ENCODE measurements at regions of chr14 and their contacts with region 1.

Region 1: DNA sequence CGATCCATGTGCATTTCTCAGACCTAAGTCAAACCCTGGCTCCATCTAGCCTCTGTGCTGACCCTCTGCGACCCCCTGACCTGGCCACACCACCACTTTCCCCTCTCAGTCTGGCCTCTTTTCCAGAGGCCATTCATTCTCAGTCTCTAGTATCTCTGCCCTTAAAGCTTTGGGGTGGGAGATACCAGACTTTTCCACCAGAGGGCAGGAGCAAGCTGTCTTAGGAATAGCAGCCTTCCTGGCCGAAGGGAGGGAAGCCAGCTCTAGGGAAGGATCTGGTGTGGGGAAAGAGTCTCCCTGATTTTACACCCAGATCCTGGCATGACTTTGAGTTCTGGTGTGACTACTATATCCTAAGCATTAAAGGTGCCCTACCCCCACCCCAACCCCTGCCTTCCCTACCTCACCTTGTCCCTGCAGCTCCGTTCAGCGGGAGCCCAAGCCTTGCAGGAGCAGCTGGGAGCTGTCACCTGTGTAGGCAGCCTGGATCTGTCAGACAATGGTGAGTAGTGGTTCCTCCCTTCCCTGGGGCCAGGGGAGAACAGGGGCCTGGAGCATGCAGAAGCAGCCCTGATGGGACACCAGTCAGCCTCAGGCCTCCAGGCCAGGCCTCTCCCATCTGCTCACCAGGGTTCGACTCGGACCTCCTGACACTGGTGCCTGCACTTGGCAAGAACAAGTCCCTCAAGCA is 6.6 kb downstream of the CARMIL3 start:
- DNase-seq: peak in 6 of 7 donors; percentile 72 to 92 (median 86)
- H3K4me3 ChIP-seq: no peak overlapping the region
- H3K27ac ChIP-seq: no peak overlapping the region
- H3K4me1 ChIP-seq: peaks cover 0 to under 1% of the 10 kb centered on the region in 2 donors
- H3K27me3 ChIP-seq: no peaks in the 10 kb centered on the region
- CTCF ChIP-seq: peak; percentile 86 to 98 (median 92)
- POLR2A ChIP-seq: no peak

Region 2: DNA sequence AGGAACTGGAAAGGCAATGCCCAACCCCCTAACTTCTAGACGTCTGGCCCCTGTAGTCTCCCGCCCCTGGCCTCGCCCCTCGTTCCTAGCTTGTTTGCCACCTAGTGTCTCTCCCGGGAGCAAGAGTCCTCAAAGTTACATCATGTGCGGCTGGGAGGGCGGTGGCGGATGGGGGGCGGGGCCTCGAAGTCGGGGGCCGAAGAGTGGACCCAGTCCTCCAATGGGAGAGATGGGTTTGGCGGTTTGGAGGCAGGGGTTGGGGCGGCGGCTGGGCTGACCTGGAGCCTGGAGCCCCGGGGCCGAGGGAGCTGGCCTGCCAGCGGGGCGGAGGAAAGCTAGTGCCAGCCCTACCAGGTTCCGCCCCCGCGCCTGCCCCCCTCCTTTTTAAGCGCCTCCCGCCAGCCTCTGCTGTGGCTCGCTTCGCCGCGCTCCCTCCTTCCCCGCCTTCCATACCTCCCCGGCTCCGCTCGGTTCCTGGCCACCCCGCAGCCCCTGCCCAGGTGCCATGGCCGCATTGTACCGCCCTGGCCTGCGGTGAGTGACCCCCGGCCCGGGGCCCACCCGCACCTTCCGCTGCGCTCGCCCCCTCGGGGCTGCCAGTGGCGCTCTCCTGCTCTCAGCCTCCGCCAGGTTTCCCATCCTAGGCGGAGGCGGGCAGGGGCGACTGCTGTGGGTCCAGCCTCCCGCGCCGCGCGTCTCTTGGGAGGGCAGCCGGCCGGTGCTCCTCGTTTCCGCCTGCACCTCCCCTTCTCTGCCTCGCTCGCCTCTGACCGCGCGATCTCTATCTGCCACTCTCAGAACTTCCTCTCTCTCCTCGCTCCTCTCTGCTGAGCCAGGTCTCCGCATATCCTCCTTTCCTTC is 35.7 kb after region 1 on chr14 and contains the start of gene PCK2:
- intact Hi-C with region 1: loop called (anchors 5 kb)
- DNase-seq: peak; percentile 86 to 97 (median 95)
- H3K4me3 ChIP-seq: peak within 1 kb of the TSS; percentile 72 to 96 (median 84)
- H3K27ac ChIP-seq: peak within 1 kb of the TSS; percentile 55 to 91 (median 89)
- H3K4me1 ChIP-seq: peaks cover 4 to 21% of the 10 kb centered on the region in 2 donors
- H3K27me3 ChIP-seq: no peaks in the 10 kb centered on the region
- CTCF ChIP-seq: peak in 3 of 6 experiments; percentile 8 to 25 (median 14)
- POLR2A ChIP-seq: peak; percentile 46 to 64
- total RNA-seq, gene PCK2: 4.4 to 37.0 (median 18.4) TPM

Region 3: DNA sequence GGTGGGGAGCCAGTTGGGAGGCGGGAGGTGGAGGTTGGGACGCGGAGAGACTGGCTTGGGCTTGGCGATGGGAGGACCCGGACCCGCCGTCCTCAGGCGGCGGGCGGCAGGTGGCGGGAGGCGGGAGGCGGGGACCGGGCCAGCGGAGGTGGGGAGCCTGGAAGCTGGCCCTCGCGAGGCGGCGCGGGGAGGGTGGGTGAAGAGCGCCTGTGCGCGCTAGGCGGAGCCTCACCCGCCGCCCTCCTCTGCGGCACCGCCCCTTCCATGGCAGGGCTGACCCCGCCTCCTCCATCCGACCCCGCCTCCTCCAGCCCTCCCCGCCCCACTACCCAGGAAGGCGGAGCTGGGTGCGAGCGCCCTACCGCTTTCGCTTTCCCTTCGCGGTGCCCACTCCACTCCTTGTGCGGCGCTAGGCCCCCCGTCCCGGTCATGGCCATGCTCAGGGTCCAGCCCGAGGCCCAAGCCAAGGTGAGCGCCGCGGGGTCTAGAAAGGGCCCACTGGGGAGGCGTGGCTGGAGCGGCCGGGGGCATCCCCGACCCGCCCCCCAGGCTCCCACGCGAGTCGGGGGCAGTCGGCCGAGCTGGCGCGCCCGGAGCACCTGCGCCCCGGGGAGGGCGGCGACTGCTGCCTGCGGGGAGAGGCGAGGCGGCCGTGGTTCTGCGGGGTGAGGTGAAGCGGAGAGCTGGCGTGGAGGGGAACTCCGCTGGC is 77.6 kb after region 1 on chr14 and contains the start of gene PSME1:
- intact Hi-C with region 1: no loop called
- DNase-seq: peak; percentile 93 to 96 (median 95)
- H3K4me3 ChIP-seq: peak within 1 kb of the TSS; percentile 54 to 95 (median 77)
- H3K27ac ChIP-seq: peak within 1 kb of the TSS; percentile 80 to 96 (median 85)
- H3K4me1 ChIP-seq: peaks cover 35 to 61% of the 10 kb centered on the region in 2 donors
- H3K27me3 ChIP-seq: no peaks in the 10 kb centered on the region
- CTCF ChIP-seq: no peak
- POLR2A ChIP-seq: peak in 1 of 2 donors; percentile 59
- total RNA-seq, gene PSME1: 208 to 359 (median 277) TPM

Measured in adrenal gland (tissue), 19 donors.